Dorsolateral prefrontal cortex (tissue), 120 donors: ENCODE measurements at regions of chr11 and their contacts with region 1.

Region 1: GRCh38 chr11:130314750-130315285 is at the start of gene ZBTB44:
- DNase-seq: peak; percentile 91 to 96 (median 94)
- H3K4me3 ChIP-seq: peak within 1 kb of the TSS; percentile 53 to 98 (median 89)
- H3K27ac ChIP-seq: peak within 1 kb of the TSS; percentile 55 to 95 (median 88)
- H3K27me3 ChIP-seq: no peaks in the 10 kb centered on the region
- CTCF ChIP-seq: peak in 10 of 56 donors; percentile 13 to 40 (median 34)
- total RNA-seq, gene ZBTB44: 48.9 to 117 (median 68.8) TPM

Region 2: DNA sequence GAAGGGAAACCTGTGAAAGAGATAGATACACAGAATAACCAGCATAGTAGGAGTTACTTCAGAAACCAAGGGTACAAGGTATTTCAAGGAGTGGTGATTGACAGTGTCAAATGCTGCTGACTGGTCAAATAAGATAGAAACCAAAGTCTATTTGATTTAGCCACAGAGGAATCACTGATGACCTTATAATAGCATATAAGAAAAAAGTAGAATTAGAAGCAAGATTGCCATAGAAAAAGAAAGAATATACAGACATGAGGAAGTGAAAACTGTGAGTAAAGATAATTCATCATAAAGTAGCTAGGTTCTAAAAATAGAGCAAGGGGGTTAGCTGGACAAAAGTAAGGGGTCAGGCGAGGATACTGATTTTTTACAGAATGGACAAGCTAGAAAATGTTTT is 14.3 kb before region 1 on chr11:
- intact Hi-C with region 1: no loop called
- DNase-seq: no peak
- H3K4me3 ChIP-seq: no peak overlapping the region
- H3K27ac ChIP-seq: no peak overlapping the region
- H3K27me3 ChIP-seq: no peaks in the 10 kb centered on the region
- CTCF ChIP-seq: no peak

Region 3: DNA sequence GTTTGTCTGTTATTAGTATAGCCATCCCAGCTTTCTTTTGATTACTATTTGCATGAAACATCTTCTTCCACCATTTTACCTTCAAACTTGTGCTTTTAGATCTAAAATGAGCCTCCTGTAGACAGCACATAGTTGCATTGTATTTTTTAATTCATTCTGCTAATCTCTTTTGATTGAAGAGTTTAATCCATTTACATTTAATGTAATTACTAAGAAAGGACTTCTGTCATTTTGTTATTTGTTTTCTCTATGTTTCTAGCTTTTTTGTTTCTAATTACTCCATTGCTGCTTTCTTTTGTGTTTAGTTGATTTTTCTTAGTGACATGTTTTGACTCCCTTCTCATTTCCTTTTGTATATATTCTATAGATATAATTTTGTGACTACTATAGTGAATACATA is 43.6 kb after region 1 on chr11:
- intact Hi-C with region 1: no loop called
- DNase-seq: no peak
- H3K4me3 ChIP-seq: no peak overlapping the region
- H3K27ac ChIP-seq: no peak overlapping the region
- H3K27me3 ChIP-seq: no peaks in the 10 kb centered on the region
- CTCF ChIP-seq: no peak

Region 4: DNA sequence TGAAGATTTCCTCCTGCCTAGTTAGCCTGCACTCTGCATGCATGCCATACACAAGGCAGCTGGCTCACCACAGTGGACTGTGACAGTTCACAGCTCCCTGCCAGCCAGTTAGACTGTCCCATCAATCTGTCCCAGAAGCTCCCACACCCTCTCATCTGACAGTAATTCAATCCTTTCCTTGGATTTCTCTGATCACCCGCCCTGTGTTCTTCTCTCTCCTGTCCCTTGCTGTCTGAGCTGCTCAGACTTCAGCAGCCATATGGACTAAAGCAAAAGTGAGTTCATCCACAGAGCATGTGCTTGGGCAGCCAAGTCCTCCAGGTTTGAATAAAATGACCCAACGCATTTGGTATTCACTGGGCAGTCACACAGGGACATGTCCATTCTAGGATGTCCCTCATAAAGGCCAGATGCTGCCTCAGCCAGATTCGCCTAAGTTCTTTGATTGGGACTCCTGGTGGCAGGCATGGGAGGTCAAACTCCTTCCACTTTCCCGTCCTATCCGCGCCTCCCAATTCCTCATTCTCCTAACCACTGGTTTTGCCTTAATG is 54.4 kb after region 1 on chr11:
- intact Hi-C with region 1: loop called in 1 of 2 experiments (anchors 1 kb)
- DNase-seq: peak in 9 of 10 donors; percentile 40 to 83 (median 71)
- H3K4me3 ChIP-seq: peak overlapping the region in 42 of 59 donors; percentile 1 to 54 (median 22)
- H3K27ac ChIP-seq: peak overlapping the region in 58 of 59 donors; percentile 49 to 98 (median 92)
- H3K27me3 ChIP-seq: no peaks in the 10 kb centered on the region
- CTCF ChIP-seq: peak in 7 of 56 donors; percentile 4 to 8 (median 7)

Region 5: GRCh38 chr11:130389335-130389935 is 74.6 kb after region 1 on chr11:
- intact Hi-C with region 1: loop called in 1 of 2 experiments (anchors 5 kb)
- DNase-seq: peak in 2 of 10 donors; percentile 25 to 38
- H3K4me3 ChIP-seq: peak overlapping the region in 7 of 59 donors; percentile 0 to 15 (median 8)
- H3K27ac ChIP-seq: peak overlapping the region in 46 of 59 donors; percentile 0 to 76 (median 44)
- H3K27me3 ChIP-seq: no peaks in the 10 kb centered on the region
- CTCF ChIP-seq: no peak

Region 6: DNA sequence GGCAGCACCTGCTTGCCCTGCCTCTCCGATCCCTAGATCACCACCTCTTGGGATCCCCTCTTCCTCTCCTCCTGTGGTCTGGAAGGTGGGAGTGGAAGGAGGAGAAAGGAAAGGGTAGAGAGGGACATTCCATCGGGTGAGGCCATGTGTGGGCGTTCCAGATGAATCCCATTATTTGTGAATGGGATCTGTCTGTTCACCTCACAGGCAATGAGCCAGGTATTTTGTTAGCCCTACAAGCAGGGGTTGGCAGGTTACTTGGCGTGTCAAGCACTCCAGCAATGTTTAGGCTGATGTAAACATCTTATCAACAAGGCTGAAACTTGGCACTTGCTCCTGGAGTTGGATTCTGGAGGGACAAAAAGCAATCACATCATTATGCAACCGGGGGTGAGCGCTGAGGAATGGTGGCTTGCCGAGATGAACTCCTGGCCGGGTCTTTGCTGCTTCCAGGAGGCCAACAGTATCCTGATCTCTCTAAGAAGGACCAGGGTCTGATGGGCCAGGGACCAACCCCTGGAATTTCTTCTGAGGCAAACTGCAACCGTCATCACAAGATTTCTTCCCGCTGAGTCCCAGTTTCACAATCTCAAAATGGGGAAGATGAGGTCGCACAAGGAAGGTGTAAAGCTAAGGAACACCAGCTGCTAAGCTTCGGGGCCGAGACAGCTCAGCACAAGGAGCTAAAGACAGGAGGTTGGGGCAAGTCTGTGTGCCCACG is 105.8 kb after region 1 on chr11:
- intact Hi-C with region 1: loop called (anchors 2 to 5 kb)
- DNase-seq: peak in 1 of 10 donors; percentile 59
- H3K4me3 ChIP-seq: no peak overlapping the region
- H3K27ac ChIP-seq: peak overlapping the region in 51 of 59 donors; percentile 19 to 93 (median 63)
- H3K27me3 ChIP-seq: no peaks in the 10 kb centered on the region
- CTCF ChIP-seq: no peak

Region 7: GRCh38 chr11:130427581-130428315 is 112.9 kb after region 1 on chr11:
- intact Hi-C with region 1: loop called in 1 of 2 experiments (anchors 5 kb)
- DNase-seq: peak in 8 of 10 donors; percentile 55 to 80 (median 65)
- H3K4me3 ChIP-seq: peak overlapping the region; percentile 46 to 82 (median 66)
- H3K27ac ChIP-seq: peak overlapping the region in 53 of 59 donors; percentile 12 to 91 (median 75)
- H3K27me3 ChIP-seq: peaks cover 0 to 14% (median 0%) of the 10 kb centered on the region in 45 donors
- CTCF ChIP-seq: peak in 53 of 56 donors; percentile 13 to 69 (median 49)